ENCODE measurements at regions of chr10 and their contacts with region 1.

Region 1: GRCh38 chr10:119596537-119597404 is at the start of gene TIAL1:
- DNase-seq: peak; percentile 99
- H3K4me3 ChIP-seq: peak within 1 kb of the TSS; percentile 62 to 98 (median 98)
- H3K27ac ChIP-seq: peak within 1 kb of the TSS; percentile 76
- H3K4me1 ChIP-seq: peaks cover 30% of the 10 kb centered on the region
- H3K27me3 ChIP-seq: no peaks in the 10 kb centered on the region
- CTCF ChIP-seq: no peak
- total RNA-seq, gene TIAL1: 47.8 to 141 TPM

Region 2: DNA sequence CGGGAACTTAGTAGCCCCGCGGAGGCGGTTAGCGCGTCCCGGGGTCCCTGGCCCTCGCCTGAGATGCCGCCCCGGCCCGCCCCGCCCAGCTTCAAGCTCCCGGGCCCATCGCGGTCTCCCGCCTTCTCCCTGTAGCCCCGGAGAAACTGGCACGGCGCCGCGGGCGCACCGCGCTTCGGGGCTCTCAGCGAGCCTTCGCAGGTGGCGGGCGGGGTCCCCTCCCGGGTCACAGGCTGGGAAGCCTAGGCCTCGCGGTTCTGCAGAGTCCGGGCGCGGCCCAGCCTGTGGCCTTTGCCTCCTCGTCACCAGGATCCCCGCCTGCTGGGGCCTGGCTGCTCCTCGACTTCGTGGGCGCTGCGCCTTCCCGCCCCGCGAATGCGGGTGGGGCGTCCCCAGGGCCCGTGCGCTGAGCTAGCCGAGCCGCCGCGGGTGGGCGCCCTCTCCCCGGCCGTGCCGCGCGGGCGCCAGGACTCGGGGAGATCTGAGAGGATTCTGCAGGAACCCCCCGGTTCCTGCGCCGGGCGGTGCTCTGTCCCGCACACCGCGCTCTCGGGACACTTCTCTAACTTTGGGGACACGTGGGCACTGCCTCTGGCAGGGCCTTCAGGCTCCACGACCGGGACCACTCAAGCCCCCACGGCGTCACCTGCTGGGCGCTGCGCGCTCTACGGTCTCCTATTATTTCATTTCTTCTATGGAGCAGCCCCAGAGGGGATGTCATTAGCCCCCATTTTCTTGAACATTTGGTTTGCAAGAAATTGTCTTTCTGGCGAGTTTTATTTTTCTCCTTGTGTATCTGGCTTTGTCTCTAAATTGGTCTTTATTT is 53.6 kb before region 1 on chr10:
- CTCF ChIA-PET with region 1: no interaction called
- dilution Hi-C with region 1: no loop called
- in situ Hi-C with region 1: no loop called
- intact Hi-C with region 1: loop called (anchors 2 kb)
- DNase-seq: peak; percentile 65
- H3K4me3 ChIP-seq: peak overlapping the region; percentile 69 to 82 (median 77)
- H3K27ac ChIP-seq: no peak overlapping the region
- H3K4me1 ChIP-seq: peaks cover 30% of the 10 kb centered on the region
- H3K27me3 ChIP-seq: peaks cover 2% of the 10 kb centered on the region
- CTCF ChIP-seq: peak; percentile 1 to 39

Region 3: GRCh38 chr10:119650692-119651513 is 54.1 kb after region 1 on chr10 and contains the start of gene BAG3:
- CTCF ChIA-PET with region 1: no interaction called
- dilution Hi-C with region 1: no loop called
- in situ Hi-C with region 1: loop called in 1 of 2 experiments (anchors 10 kb)
- intact Hi-C with region 1: loop called (anchors 2 kb)
- DNase-seq: peak; percentile 92
- H3K4me3 ChIP-seq: peak within 1 kb of the TSS; percentile 95 to 97 (median 96)
- H3K27ac ChIP-seq: peak within 1 kb of the TSS; percentile 77
- H3K4me1 ChIP-seq: peaks cover 24% of the 10 kb centered on the region
- H3K27me3 ChIP-seq: no peaks in the 10 kb centered on the region
- CTCF ChIP-seq: no peak
- total RNA-seq, gene BAG3: 41.0 to 117 TPM

Region 4: GRCh38 chr10:119667562-119668328 is 71.0 kb after region 1 on chr10:
- CTCF ChIA-PET with region 1: no interaction called
- dilution Hi-C with region 1: loop called (anchors 5 kb)
- in situ Hi-C with region 1: no loop called
- intact Hi-C with region 1: no loop called
- DNase-seq: peak; percentile 96
- H3K4me3 ChIP-seq: no peak overlapping the region
- H3K27ac ChIP-seq: peak overlapping the region; percentile 64
- H3K4me1 ChIP-seq: peaks cover 71% of the 10 kb centered on the region
- H3K27me3 ChIP-seq: no peaks in the 10 kb centered on the region
- CTCF ChIP-seq: peak in 1 of 2 donors; percentile 25

Region 5: DNA sequence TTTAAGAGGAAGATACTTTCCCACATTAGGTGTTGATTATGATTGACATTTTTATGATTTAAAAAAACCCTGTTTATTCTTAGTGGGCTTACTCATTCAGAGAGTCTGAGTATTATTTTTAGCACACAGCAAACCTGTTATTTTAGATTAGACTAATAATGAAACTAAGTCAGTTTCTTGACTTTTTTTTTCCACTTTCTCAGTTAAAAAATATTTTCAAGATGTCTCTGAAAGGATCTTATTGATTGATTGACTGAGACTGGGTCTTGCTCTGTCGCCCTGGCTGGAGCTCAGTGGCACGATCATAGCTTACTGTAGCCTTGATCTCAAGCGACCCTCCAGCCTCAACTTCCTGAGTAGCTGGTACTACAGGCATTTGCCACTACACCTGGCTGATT is 108.7 kb after region 1 on chr10:
- CTCF ChIA-PET with region 1: no interaction called
- dilution Hi-C with region 1: no loop called
- in situ Hi-C with region 1: no loop called
- intact Hi-C with region 1: no loop called
- DNase-seq: no peak
- H3K4me3 ChIP-seq: no peak overlapping the region
- H3K27ac ChIP-seq: no peak overlapping the region
- H3K4me1 ChIP-seq: peaks cover 7% of the 10 kb centered on the region
- H3K27me3 ChIP-seq: no peaks in the 10 kb centered on the region
- CTCF ChIP-seq: no peak